Right cardiac atrium (tissue), 5 donors: ENCODE measurements at regions of chr9 and their contacts with region 1.

Region 1: GRCh38 chr9:70639853-70640814 is 225.7 kb upstream of the KLF9 start:
- DNase-seq: no peak
- ATAC-seq: peak; percentile 63 to 72
- H3K4me3 ChIP-seq: peak overlapping the region; percentile 28
- H3K27ac ChIP-seq: no peak overlapping the region
- H3K4me1 ChIP-seq: no peaks in the 10 kb centered on the region
- H3K27me3 ChIP-seq: no peaks in the 10 kb centered on the region

Region 2: DNA sequence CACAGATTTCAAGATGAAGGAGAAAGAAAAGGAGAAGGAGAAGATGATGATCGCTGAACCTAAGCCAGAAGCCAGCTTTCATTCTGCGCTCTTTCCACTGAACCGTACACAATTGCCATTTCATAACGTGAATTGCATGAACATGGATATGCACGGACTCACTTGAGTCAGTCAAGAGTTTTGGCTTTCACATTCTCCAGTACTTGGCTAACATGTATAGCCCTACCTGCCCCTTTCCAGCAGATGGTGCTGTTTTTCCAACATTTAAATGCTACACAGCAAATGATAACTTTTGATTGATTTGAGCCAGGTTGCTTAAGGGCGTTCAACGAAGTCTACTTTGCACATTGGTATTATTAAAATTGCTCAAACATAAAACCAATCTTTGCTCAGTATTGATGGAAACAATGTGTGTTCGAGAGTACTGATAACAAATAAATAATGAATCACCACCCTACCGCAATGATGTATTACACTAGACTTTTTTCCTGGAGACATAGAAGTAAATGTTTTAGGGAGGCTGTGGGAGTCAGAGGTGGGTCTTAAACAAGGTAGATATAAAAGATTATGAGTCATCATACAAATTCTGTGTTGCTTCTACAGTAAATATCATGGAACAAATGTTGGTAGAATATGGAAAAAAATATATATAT is 284.9 kb after region 1 on chr9:
- intact Hi-C with region 1: loop called in 1 of 4 experiments (anchors 5 kb)
- DNase-seq: no peak
- ATAC-seq: peak; percentile 92 to 94
- H3K4me3 ChIP-seq: no peak overlapping the region
- H3K27ac ChIP-seq: peak overlapping the region; percentile 26
- H3K4me1 ChIP-seq: no peaks in the 10 kb centered on the region
- H3K27me3 ChIP-seq: no peaks in the 10 kb centered on the region

Region 3: DNA sequence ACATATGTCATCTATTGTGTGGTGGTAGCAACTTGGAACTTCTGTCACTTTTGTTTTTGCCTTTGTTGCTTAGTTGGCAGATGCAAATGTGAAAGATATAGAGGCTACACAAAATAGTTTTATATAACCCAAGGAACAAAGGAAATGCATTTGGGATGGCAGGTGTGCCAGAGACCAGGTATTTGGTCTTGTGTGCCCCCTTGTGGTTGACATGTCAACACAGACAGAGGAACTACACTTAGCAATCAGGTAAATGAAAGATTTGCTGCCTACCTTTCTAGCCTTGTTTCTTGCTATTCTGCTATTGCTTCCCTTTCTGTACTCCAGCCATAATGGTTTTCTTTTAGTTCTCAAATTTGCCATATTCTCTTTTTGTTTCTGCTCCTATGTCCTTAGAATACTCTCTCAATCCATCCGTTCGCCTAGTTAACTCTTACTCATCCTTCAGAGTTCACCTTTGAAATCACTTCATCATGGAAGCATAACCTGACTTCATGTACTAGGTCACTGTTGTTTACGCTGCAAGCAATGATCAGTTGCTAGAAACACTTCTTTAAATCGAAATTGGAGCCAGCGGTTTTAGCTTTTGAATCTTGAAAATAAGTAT is 361.7 kb after region 1 on chr9:
- intact Hi-C with region 1: loop called in 1 of 4 experiments (anchors 10 kb)
- DNase-seq: peak in 1 of 3 donors; percentile 14
- ATAC-seq: no peak
- H3K4me3 ChIP-seq: no peak overlapping the region
- H3K27ac ChIP-seq: no peak overlapping the region
- H3K4me1 ChIP-seq: no peaks in the 10 kb centered on the region
- H3K27me3 ChIP-seq: no peaks in the 10 kb centered on the region

Region 4: DNA sequence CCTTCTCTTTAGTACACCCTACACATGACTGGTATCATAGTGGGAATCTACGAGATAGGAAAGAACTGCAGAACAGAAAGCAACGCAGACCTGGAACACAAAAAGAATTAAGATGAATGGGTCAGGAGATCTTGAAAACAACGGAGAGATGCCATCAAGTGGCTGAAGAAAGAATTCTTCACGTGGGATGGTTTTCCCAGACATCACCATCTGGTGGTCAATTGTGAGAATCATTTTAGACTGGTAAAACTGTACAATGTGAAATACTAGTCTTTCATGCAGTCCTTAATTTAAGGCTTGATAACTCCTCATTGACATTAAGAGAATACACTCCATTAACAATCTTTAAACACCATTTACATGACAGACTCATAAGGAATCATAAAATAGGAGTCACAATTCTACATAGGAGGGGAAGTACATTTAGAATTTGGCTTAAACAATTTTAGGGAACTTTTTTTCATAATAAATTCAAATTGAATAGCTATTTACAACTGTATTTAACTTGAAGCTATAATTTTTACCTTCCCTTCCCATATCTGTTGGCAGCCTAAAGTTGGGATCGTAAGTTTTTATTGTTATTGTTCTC is 609.7 kb after region 1 on chr9:
- intact Hi-C with region 1: loop called in 3 of 4 experiments (anchors 5 kb)
- DNase-seq: no peak
- ATAC-seq: peak; percentile 61 to 77
- H3K4me3 ChIP-seq: no peak overlapping the region
- H3K27ac ChIP-seq: no peak overlapping the region
- H3K4me1 ChIP-seq: no peaks in the 10 kb centered on the region
- H3K27me3 ChIP-seq: no peaks in the 10 kb centered on the region